Esophagus muscularis mucosa (tissue), 4 donors: ENCODE measurements at regions of chr4 and their contacts with region 1.

Region 1: GRCh38 chr4:78864405-78865024 is 74.7 kb downstream of the PAQR3 start:
- DNase-seq: no peak
- H3K4me3 ChIP-seq: no peak overlapping the region
- H3K27ac ChIP-seq: no peak overlapping the region
- H3K4me1 ChIP-seq: peaks cover 0 to 4% (median 0%) of the 10 kb centered on the region in 4 donors
- H3K27me3 ChIP-seq: no peaks in the 10 kb centered on the region
- CTCF ChIP-seq: peak; percentile 75 to 86 (median 76)
- EP300 ChIP-seq: no peak
- POLR2A ChIP-seq: no peak

Region 2: GRCh38 chr4:78612398-78613178 is 251.9 kb before region 1 on chr4:
- intact Hi-C with region 1: loop called (anchors 2 kb)
- DNase-seq: no peak
- H3K4me3 ChIP-seq: no peak overlapping the region
- H3K27ac ChIP-seq: no peak overlapping the region
- H3K4me1 ChIP-seq: peaks cover 0 to 16% (median 0%) of the 10 kb centered on the region in 4 donors
- H3K27me3 ChIP-seq: no peaks in the 10 kb centered on the region
- CTCF ChIP-seq: peak; percentile 68 to 69 (median 69)
- EP300 ChIP-seq: no peak
- POLR2A ChIP-seq: no peak

Region 3: DNA sequence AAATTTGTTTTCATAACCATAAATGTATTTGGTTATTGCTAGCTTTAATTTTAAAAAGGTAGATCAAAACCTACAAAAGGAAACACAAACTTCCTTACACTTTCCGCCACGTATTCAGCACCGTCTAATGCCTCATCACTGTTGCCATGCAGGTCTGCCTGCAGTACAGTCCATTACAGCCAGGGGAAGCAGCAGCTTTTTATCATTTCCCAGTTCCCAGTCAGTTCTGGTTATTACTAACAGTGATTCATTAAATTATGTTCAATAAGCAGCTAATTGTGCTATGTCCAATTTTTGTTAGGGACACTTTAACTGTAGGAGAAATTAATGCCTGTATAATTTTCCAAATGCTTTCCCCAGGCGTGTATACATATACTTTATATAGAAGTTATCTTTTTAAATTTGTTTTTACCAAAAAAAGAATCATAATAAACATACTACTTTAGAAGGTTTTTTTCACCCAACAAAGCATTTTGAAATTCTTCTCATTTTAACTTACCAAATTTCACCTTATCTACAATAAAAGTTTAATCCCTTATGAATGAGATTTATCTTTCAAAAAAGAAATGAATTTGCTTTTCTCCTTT is 219.7 kb before region 1 on chr4:
- intact Hi-C with region 1: loop called (anchors 10 kb)
- DNase-seq: no peak
- H3K4me3 ChIP-seq: no peak overlapping the region
- H3K27ac ChIP-seq: peak overlapping the region; percentile 76 to 84 (median 79)
- H3K4me1 ChIP-seq: peaks cover 34 to 49% (median 37%) of the 10 kb centered on the region in 4 donors
- H3K27me3 ChIP-seq: no peaks in the 10 kb centered on the region
- CTCF ChIP-seq: peak; percentile 98 to 99 (median 99)
- EP300 ChIP-seq: no peak
- POLR2A ChIP-seq: no peak

Region 4: GRCh38 chr4:78704981-78705683 is 159.4 kb before region 1 on chr4:
- intact Hi-C with region 1: no loop called
- DNase-seq: no peak
- H3K4me3 ChIP-seq: no peak overlapping the region
- H3K27ac ChIP-seq: no peak overlapping the region
- H3K4me1 ChIP-seq: peaks cover 0 to 15% (median 7%) of the 10 kb centered on the region in 4 donors
- H3K27me3 ChIP-seq: no peaks in the 10 kb centered on the region
- CTCF ChIP-seq: no peak
- EP300 ChIP-seq: no peak
- POLR2A ChIP-seq: no peak

Region 5: GRCh38 chr4:78775303-78776030 is 89.0 kb before region 1 on chr4:
- intact Hi-C with region 1: loop called (anchors 10 kb)
- DNase-seq: peak; percentile 98
- H3K4me3 ChIP-seq: peak overlapping the region; percentile 65 to 98 (median 87)
- H3K27ac ChIP-seq: peak overlapping the region; percentile 96 to 100 (median 98)
- H3K4me1 ChIP-seq: peaks cover 33 to 46% (median 41%) of the 10 kb centered on the region in 4 donors
- H3K27me3 ChIP-seq: no peaks in the 10 kb centered on the region
- CTCF ChIP-seq: no peak
- EP300 ChIP-seq: peak; percentile 68
- POLR2A ChIP-seq: no peak